ENCODE measurements at regions of chr2 and their contacts with region 1.

Region 1: GRCh38 chr2:112054847-112055729 is at the start of gene TMEM87B:
- DNase-seq: peak; percentile 99
- H3K4me3 ChIP-seq: peak within 1 kb of the TSS; percentile 45 to 83 (median 81)
- H3K27ac ChIP-seq: peak within 1 kb of the TSS; percentile 71
- H3K4me1 ChIP-seq: peaks cover 22% of the 10 kb centered on the region
- H3K27me3 ChIP-seq: no peaks in the 10 kb centered on the region
- CTCF ChIP-seq: no peak
- POLR2A ChIP-seq: peak; percentile 89
- total RNA-seq, gene TMEM87B: 21.5 and 22.1 TPM in 2 replicates

Region 2: DNA sequence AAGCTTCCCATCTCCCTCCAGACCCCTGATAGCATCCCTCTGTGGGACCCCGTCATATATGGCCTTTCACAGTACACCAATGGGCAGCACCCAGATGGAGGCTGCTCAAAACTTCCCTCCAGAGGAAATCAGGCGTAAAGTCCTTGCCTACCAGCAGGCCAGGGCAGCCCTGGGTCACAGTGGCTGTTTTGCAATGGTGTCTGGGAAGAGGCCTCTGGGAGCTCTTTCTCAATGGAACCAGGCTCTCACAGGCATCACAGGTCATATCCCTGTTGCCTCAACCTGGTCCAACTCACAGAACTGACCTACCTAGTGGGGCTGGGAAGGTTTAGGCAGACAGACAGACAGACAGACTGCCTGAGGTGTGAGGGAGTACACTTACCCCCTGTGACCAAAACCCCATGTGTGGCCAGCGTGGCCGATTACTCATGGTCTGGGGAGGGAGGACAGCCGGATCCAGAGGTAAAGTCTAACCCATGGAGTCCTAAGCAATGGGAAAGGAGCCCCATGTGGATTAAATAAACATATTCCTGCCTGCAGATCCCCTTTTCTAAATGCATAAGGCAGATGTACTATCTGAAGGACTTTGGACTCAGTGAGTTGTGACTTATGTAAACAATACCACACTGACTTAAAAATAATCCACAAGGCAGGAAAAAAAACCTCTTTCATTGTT is 876.2 kb before region 1 on chr2:
- CTCF ChIA-PET with region 1: no interaction called
- POLR2A ChIA-PET with region 1: no interaction called
- dilution Hi-C with region 1: no loop called
- intact Hi-C with region 1: no loop called
- DNase-seq: no peak
- H3K4me3 ChIP-seq: no peak overlapping the region
- H3K27ac ChIP-seq: no peak overlapping the region
- H3K4me1 ChIP-seq: no peaks in the 10 kb centered on the region
- H3K27me3 ChIP-seq: peaks cover 57 to 69% of the 10 kb centered on the region in 2 experiments
- CTCF ChIP-seq: no peak
- POLR2A ChIP-seq: no peak

Region 3: DNA sequence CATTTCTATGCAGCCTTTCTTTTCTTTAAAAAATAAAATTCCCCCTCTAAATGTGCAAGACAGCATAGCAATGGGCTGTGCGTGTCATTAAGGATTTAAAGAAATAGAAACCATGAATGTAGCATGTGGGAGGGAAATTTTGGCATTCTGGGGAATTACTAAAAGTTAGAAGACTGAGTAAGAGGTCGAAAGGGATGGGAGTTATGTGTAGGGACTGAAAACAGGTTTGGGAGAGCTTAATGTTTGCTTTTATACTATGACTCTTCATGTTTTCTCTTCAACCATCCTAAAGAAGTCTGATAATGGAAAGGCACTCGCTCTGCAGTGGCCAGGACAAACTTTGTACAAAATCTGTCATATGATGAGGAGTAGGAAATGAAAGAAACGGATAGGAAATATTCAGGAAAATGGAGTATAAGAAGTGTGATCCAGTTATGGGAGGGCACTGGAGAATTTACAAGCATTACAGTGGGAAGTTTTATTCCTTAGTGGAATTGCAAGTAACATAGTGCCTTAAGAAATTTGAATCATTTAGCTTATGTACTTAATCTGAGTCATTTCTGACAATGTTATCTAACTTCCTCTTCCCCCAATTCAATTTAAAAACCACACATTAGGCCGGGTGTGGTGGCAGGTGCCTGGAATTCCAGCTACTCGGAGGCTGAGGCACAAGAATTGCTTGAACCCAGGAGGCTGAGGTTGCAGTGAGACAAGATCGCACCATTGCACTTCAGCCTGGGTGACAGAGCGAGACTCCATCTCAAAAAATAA is 20.6 kb after region 1 on chr2:
- CTCF ChIA-PET with region 1: interaction called, 4 read pairs
- POLR2A ChIA-PET with region 1: interaction called, 11 read pairs
- dilution Hi-C with region 1: no loop called
- intact Hi-C with region 1: loop called (anchors 1 kb)
- DNase-seq: peak; percentile 86
- H3K4me3 ChIP-seq: peak overlapping the region in 2 of 3 experiments; percentile 26 to 66
- H3K27ac ChIP-seq: peak overlapping the region; percentile 98
- H3K4me1 ChIP-seq: peaks cover 34% of the 10 kb centered on the region
- H3K27me3 ChIP-seq: no peaks in the 10 kb centered on the region
- CTCF ChIP-seq: no peak
- POLR2A ChIP-seq: peak; percentile 40

Region 4: GRCh38 chr2:112092286-112093041 is 37.4 kb after region 1 on chr2:
- CTCF ChIA-PET with region 1: interaction called, 8 read pairs
- POLR2A ChIA-PET with region 1: interaction called, 3 read pairs
- dilution Hi-C with region 1: no loop called
- intact Hi-C with region 1: loop called (anchors 1 kb)
- DNase-seq: peak; percentile 89
- H3K4me3 ChIP-seq: no peak overlapping the region
- H3K27ac ChIP-seq: peak overlapping the region; percentile 90
- H3K4me1 ChIP-seq: peaks cover 30% of the 10 kb centered on the region
- H3K27me3 ChIP-seq: no peaks in the 10 kb centered on the region
- CTCF ChIP-seq: no peak
- POLR2A ChIP-seq: peak; percentile 15

Region 5: GRCh38 chr2:112108178-112108832 is 53.2 kb after region 1 on chr2:
- CTCF ChIA-PET with region 1: no interaction called
- POLR2A ChIA-PET with region 1: no interaction called
- dilution Hi-C with region 1: no loop called
- intact Hi-C with region 1: loop called (anchors 5 kb)
- DNase-seq: no peak
- H3K4me3 ChIP-seq: no peak overlapping the region
- H3K27ac ChIP-seq: no peak overlapping the region
- H3K4me1 ChIP-seq: no peaks in the 10 kb centered on the region
- H3K27me3 ChIP-seq: no peaks in the 10 kb centered on the region
- CTCF ChIP-seq: no peak
- POLR2A ChIP-seq: no peak

Region 6: GRCh38 chr2:112254466-112255239 is 199.6 kb after region 1 on chr2 and contains the start of gene ZC3H8:
- CTCF ChIA-PET with region 1: no interaction called
- POLR2A ChIA-PET with region 1: no interaction called
- dilution Hi-C with region 1: no loop called
- intact Hi-C with region 1: loop called (anchors 5 kb)
- DNase-seq: peak; percentile 89
- H3K4me3 ChIP-seq: peak within 1 kb of the TSS; percentile 49 to 89 (median 82)
- H3K27ac ChIP-seq: peak within 1 kb of the TSS; percentile 65
- H3K4me1 ChIP-seq: peaks cover 13% of the 10 kb centered on the region
- H3K27me3 ChIP-seq: no peaks in the 10 kb centered on the region
- CTCF ChIP-seq: no peak
- POLR2A ChIP-seq: peak; percentile 90
- total RNA-seq, gene ZC3H8: 7.1 and 7.8 TPM in 2 replicates

Region 7: DNA sequence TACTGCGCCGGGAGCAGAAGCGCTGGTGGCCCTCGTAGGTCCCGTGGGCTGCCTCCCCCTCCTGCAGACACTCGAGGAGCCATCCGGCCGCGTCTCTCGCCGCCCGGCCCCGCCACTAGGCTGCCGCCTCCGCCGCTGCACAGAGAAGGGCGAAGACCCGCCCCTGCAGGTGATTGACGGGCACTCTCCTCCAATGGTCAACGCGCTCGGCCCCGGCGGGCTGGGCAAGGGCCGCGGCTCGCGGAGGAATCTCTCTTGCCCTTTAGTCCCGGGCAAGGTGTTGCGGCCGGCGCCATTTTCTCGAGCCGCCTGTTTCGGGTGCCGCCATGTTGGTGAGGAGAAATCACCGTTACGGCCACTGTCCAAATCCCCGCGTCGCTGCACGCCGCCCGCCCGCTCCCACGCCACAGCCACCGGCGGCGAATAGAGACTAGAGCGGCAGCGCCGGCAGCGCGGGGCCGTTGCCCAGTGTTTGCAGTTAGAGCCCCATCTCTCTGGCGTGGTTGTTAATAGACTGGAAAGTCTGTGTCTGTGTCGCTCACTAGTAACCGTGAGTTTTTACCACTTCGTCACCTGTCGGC is 220.3 kb after region 1 on chr2 and contains the start of gene ZC3H6:
- CTCF ChIA-PET with region 1: no interaction called
- POLR2A ChIA-PET with region 1: no interaction called
- dilution Hi-C with region 1: no loop called
- intact Hi-C with region 1: loop called (anchors 5 kb)
- DNase-seq: peak; percentile 98
- H3K4me3 ChIP-seq: peak within 1 kb of the TSS; percentile 67 to 98 (median 94)
- H3K27ac ChIP-seq: peak within 1 kb of the TSS; percentile 98
- H3K4me1 ChIP-seq: peaks cover 9% of the 10 kb centered on the region
- H3K27me3 ChIP-seq: no peaks in the 10 kb centered on the region
- CTCF ChIP-seq: peak in 1 of 2 donors; percentile 12
- POLR2A ChIP-seq: peak; percentile 95
- total RNA-seq, gene ZC3H6: 2.5 and 3.0 TPM in 2 replicates

Region 8: DNA sequence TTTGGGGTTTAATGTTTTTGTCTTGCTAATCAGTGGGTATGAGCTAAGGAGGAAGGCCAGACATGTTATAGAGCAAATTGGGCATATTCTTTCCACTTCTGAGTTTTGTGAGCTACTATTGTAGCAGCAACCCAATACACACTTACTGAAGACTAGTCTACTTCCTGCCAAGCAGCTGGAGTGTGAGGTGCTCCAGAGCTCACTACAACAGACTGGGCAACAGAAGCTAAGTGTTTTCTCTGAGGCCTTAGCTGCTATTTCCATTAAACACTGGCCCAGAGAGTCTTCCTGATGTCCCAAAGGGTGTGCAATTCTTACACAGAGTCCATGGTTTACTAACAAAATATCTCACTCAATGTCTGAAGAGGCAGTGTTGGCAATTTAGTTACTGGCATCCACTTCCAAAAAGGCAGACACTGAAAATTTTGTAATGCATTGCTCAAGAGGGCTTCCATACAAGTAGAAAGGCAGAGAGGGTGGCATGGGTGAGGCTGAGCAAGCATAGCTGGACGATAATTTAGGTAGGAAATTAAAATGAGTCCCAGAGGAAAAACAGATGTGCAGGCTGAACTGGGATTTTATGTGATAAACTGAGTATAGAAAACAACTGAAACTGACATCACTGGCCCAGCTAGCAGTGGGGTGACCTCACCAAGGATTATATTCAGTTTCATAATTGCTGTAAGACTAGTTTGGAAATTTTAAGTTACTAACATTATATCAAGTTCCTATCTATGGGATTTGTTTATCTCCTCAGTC is 288.9 kb after region 1 on chr2:
- CTCF ChIA-PET with region 1: no interaction called
- POLR2A ChIA-PET with region 1: no interaction called
- dilution Hi-C with region 1: no loop called
- intact Hi-C with region 1: no loop called
- DNase-seq: no peak
- H3K4me3 ChIP-seq: no peak overlapping the region
- H3K27ac ChIP-seq: no peak overlapping the region
- H3K4me1 ChIP-seq: no peaks in the 10 kb centered on the region
- H3K27me3 ChIP-seq: no peaks in the 10 kb centered on the region
- CTCF ChIP-seq: no peak
- POLR2A ChIP-seq: no peak

Measured in endothelial cell of umbilical vein (primary cell).